GM12878 (cell line): ENCODE measurements at regions of chr18 and their contacts with region 1.

Region 1: GRCh38 chr18:11040823-11041656 is 108.3 kb downstream of the PIEZO2 start:
- DNase-seq: no peak
- ATAC-seq: peak; percentile 75
- H3K4me3 ChIP-seq: no peak overlapping the region
- H3K27ac ChIP-seq: peak overlapping the region; percentile 52
- H3K4me1 ChIP-seq: peaks cover 30% of the 10 kb centered on the region
- H3K27me3 ChIP-seq: no peaks in the 10 kb centered on the region
- CTCF ChIP-seq: peak; percentile 67 to 74 (median 69); a peak in 5 of 6 replicates
- EP300 ChIP-seq: no peak
- POLR2A ChIP-seq: no peak
- RAD21 ChIP-seq: peak; percentile 88

Region 2: GRCh38 chr18:10851824-10852319 is 189.2 kb before region 1 on chr18:
- CTCF ChIA-PET with region 1: interaction called, 192 read pairs
- POLR2A ChIA-PET with region 1: interaction called, 5 read pairs
- RAD21 ChIA-PET with region 1: interaction called, 157 read pairs
- SMC1A ChIA-PET with region 1: interaction called, 196 read pairs
- in situ Hi-C with region 1: loop called (anchors 5 kb)
- intact Hi-C with region 1: loop called (anchors 1 kb)
- DNase-seq: peak; percentile 61
- ATAC-seq: peak; percentile 80
- H3K4me3 ChIP-seq: no peak overlapping the region
- H3K27ac ChIP-seq: peak overlapping the region; percentile 69
- H3K4me1 ChIP-seq: peaks cover 28% of the 10 kb centered on the region; the same call in 1 of the 2 replicates
- H3K27me3 ChIP-seq: no peaks in the 10 kb centered on the region
- CTCF ChIP-seq: peak; percentile 57 to 83 (median 61); a peak in 5 of 6 replicates
- EP300 ChIP-seq: no peak
- POLR2A ChIP-seq: no peak
- RAD21 ChIP-seq: peak; percentile 96

Region 3: DNA sequence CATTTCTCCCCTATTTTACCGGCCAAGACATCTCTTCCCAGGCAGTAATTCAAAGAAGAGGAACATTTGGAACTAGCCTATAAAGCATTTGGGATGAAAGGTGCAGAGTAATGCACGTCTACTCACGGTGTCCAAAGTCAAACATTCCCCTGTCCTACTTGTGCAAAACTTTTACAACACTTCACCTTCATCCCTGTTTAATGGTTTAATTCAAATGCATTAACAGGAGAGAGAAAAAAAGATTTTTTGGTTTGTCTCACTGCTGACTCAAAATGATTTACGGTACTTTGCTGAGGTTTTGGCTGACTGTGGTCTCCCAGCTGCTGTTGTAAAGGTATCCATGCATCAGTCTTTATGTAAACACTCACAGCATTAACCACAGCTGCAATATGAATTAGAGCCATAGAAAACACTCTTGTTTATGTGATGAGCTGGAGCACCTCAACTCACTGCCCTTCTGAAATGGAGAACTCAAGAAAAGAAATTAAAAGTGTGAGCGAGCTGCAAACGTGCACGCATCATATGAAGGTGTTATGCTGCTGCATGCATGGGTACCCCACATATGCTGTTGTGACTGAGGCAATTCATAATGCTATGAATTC is 112.2 kb before region 1 on chr18:
- CTCF ChIA-PET with region 1: interaction called, 32 read pairs
- POLR2A ChIA-PET with region 1: interaction called, 6 read pairs
- RAD21 ChIA-PET with region 1: interaction called, 28 read pairs
- SMC1A ChIA-PET with region 1: interaction called, 19 read pairs
- in situ Hi-C with region 1: no loop called
- intact Hi-C with region 1: no loop called
- DNase-seq: peak; percentile 87
- ATAC-seq: peak; percentile 76
- H3K4me3 ChIP-seq: peak overlapping the region; percentile 48; the same call in 1 of the 2 replicates
- H3K27ac ChIP-seq: peak overlapping the region; percentile 96
- H3K4me1 ChIP-seq: peaks cover 37% of the 10 kb centered on the region
- H3K27me3 ChIP-seq: no peaks in the 10 kb centered on the region
- CTCF ChIP-seq: no peak
- EP300 ChIP-seq: peak; percentile 96 to 97
- POLR2A ChIP-seq: no peak
- RAD21 ChIP-seq: peak; percentile 24; the same call in 1 of the 2 replicates

Region 4: DNA sequence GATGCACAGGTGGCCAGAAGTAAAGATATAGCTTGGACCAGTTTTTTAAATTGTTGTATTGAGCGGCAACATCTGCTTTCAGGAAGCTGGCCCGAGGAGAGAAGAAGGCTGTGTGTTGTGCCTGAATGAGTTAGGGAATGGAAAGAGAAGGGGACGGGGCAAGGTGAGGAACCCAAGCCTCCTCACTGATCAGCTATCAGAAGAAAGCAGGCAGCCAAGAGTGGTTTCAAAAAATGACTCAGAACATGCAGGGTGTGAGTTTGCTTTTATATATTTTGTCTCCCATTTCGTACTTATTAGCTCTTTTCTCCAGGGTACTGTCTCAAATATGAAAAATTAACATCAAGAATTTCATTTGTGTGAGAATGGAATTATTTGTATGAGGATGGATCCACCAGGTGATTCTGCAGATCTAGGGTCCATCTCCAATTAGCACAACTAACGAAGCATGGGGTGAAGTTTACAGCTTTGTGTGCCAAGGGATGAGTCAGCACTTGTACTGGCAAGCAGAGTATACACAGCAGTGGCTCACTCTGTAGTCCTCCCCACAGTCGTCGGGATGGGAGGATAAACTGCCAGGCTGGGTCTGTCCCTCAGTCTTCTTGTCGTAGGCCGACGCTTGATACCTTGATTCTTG is 67.4 kb before region 1 on chr18:
- CTCF ChIA-PET with region 1: interaction called, 5 read pairs
- POLR2A ChIA-PET with region 1: no interaction called
- RAD21 ChIA-PET with region 1: interaction called, 13 read pairs
- SMC1A ChIA-PET with region 1: interaction called, 8 read pairs
- in situ Hi-C with region 1: no loop called
- intact Hi-C with region 1: no loop called
- DNase-seq: no peak
- ATAC-seq: peak; percentile 85
- H3K4me3 ChIP-seq: no peak overlapping the region
- H3K27ac ChIP-seq: peak overlapping the region; percentile 62; the same call in 1 of the 2 replicates
- H3K4me1 ChIP-seq: peaks cover 25% of the 10 kb centered on the region
- H3K27me3 ChIP-seq: no peaks in the 10 kb centered on the region
- CTCF ChIP-seq: no peak
- EP300 ChIP-seq: no peak
- POLR2A ChIP-seq: no peak
- RAD21 ChIP-seq: no peak

Region 5: GRCh38 chr18:11027862-11028261 is 13.2 kb before region 1 on chr18:
- CTCF ChIA-PET with region 1: interaction called, 49 read pairs
- POLR2A ChIA-PET with region 1: interaction called, 8 read pairs
- RAD21 ChIA-PET with region 1: interaction called, 24 read pairs
- SMC1A ChIA-PET with region 1: interaction called, 61 read pairs
- in situ Hi-C with region 1: no loop called
- intact Hi-C with region 1: no loop called
- DNase-seq: peak; percentile 68
- ATAC-seq: peak; percentile 99
- H3K4me3 ChIP-seq: no peak overlapping the region
- H3K27ac ChIP-seq: peak overlapping the region; percentile 73
- H3K4me1 ChIP-seq: peaks cover 25% of the 10 kb centered on the region
- H3K27me3 ChIP-seq: no peaks in the 10 kb centered on the region
- CTCF ChIP-seq: no peak
- EP300 ChIP-seq: peak in 1 of 2 experiments; percentile 45; a peak in 1 of 4 replicates
- POLR2A ChIP-seq: peak; percentile 49
- RAD21 ChIP-seq: no peak

Region 6: GRCh38 chr18:11089931-11090715 is 49.1 kb after region 1 on chr18:
- CTCF ChIA-PET with region 1: interaction called, 6 read pairs
- POLR2A ChIA-PET with region 1: interaction called, 3 read pairs
- RAD21 ChIA-PET with region 1: no interaction called
- SMC1A ChIA-PET with region 1: interaction called, 3 read pairs
- in situ Hi-C with region 1: no loop called
- intact Hi-C with region 1: loop called (anchors 10 kb)
- DNase-seq: no peak
- ATAC-seq: peak; percentile 51
- H3K4me3 ChIP-seq: peak overlapping the region; percentile 36; the same call in 1 of the 2 replicates
- H3K27ac ChIP-seq: peak overlapping the region; percentile 56
- H3K4me1 ChIP-seq: peaks cover 26% of the 10 kb centered on the region
- H3K27me3 ChIP-seq: no peaks in the 10 kb centered on the region
- CTCF ChIP-seq: no peak
- EP300 ChIP-seq: no peak
- POLR2A ChIP-seq: no peak
- RAD21 ChIP-seq: no peak

Region 7: DNA sequence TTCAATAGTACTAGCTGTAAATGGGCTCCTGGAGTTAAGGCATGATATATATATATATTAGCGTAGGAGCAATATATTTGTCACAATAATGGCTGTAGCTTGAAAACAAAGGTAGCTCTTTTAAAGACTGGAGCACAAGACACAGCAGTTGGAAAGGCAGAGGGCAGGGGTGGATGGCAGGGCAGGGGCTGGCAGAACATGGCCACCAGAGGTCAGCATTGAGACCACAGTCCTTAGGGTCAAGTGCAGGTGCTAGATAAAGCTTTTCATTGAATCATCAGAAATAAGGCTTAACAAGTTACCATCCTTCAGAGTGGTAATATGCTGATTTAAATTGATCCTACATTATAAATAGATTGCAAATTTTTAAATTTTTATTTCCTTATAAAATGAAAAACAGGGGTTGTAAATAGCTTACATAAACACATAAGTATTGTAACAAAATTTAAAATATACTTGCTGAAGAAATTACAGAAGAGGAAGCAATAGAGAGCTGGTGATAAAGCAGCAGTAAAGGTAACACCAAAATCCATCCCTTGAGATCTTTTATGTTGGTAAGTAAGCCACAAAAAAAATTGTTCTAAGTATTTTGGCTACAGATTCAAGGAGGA is 269.5 kb after region 1 on chr18:
- CTCF ChIA-PET with region 1: no interaction called
- POLR2A ChIA-PET with region 1: no interaction called
- RAD21 ChIA-PET with region 1: no interaction called
- SMC1A ChIA-PET with region 1: no interaction called
- in situ Hi-C with region 1: no loop called
- intact Hi-C with region 1: no loop called
- DNase-seq: no peak
- ATAC-seq: peak; percentile 93
- H3K4me3 ChIP-seq: no peak overlapping the region
- H3K27ac ChIP-seq: no peak overlapping the region
- H3K4me1 ChIP-seq: peaks cover 5% of the 10 kb centered on the region; the same call in 1 of the 2 replicates
- H3K27me3 ChIP-seq: peaks cover 0 to 4% of the 10 kb centered on the region in 2 experiments; a peak in 2 of 4 replicates
- CTCF ChIP-seq: peak; percentile 62 to 86 (median 83)
- EP300 ChIP-seq: no peak
- POLR2A ChIP-seq: no peak
- RAD21 ChIP-seq: peak; percentile 65

Region 8: DNA sequence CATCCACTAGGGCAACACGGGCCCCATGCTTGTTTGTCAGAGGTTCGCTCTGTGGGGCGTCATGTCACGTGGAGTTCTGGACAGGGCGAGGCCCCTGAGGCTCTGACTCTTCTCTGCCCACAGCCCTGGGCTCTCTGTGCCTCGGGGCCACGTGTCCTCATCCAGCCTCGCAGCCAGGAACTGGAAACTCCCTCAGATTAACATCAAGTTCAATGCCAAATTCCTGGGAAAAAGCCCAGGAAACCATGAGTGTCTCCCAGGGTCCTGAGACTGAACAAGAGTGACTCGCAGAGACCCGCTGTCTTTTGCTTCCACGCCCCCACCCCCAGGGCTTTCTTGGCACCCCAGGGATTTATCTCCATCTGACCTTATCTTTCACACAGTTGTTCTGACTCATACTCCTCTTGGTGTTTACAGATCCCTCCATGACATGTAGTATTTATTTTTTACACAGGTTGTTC is 282.3 kb after region 1 on chr18:
- CTCF ChIA-PET with region 1: no interaction called
- POLR2A ChIA-PET with region 1: no interaction called
- RAD21 ChIA-PET with region 1: no interaction called
- SMC1A ChIA-PET with region 1: no interaction called
- in situ Hi-C with region 1: no loop called
- intact Hi-C with region 1: no loop called
- DNase-seq: no peak
- ATAC-seq: no peak
- H3K4me3 ChIP-seq: no peak overlapping the region
- H3K27ac ChIP-seq: no peak overlapping the region
- H3K4me1 ChIP-seq: peaks cover 17% of the 10 kb centered on the region
- H3K27me3 ChIP-seq: no peaks in the 10 kb centered on the region
- CTCF ChIP-seq: no peak
- EP300 ChIP-seq: no peak
- POLR2A ChIP-seq: no peak
- RAD21 ChIP-seq: no peak

Region 9: GRCh38 chr18:11857177-11857887 is 816.3 kb after region 1 on chr18:
- CTCF ChIA-PET with region 1: no interaction called
- POLR2A ChIA-PET with region 1: no interaction called
- RAD21 ChIA-PET with region 1: no interaction called
- SMC1A ChIA-PET with region 1: no interaction called
- in situ Hi-C with region 1: no loop called
- intact Hi-C with region 1: no loop called
- DNase-seq: no peak
- ATAC-seq: no peak
- H3K4me3 ChIP-seq: no peak overlapping the region
- H3K27ac ChIP-seq: no peak overlapping the region
- H3K4me1 ChIP-seq: peaks cover 7% of the 10 kb centered on the region
- H3K27me3 ChIP-seq: no peaks in the 10 kb centered on the region; a peak in 1 of 4 replicates
- CTCF ChIP-seq: no peak
- EP300 ChIP-seq: no peak
- POLR2A ChIP-seq: no peak
- RAD21 ChIP-seq: no peak